ENCODE measurements at regions of chr2 and their contacts with region 1.

Region 1: DNA sequence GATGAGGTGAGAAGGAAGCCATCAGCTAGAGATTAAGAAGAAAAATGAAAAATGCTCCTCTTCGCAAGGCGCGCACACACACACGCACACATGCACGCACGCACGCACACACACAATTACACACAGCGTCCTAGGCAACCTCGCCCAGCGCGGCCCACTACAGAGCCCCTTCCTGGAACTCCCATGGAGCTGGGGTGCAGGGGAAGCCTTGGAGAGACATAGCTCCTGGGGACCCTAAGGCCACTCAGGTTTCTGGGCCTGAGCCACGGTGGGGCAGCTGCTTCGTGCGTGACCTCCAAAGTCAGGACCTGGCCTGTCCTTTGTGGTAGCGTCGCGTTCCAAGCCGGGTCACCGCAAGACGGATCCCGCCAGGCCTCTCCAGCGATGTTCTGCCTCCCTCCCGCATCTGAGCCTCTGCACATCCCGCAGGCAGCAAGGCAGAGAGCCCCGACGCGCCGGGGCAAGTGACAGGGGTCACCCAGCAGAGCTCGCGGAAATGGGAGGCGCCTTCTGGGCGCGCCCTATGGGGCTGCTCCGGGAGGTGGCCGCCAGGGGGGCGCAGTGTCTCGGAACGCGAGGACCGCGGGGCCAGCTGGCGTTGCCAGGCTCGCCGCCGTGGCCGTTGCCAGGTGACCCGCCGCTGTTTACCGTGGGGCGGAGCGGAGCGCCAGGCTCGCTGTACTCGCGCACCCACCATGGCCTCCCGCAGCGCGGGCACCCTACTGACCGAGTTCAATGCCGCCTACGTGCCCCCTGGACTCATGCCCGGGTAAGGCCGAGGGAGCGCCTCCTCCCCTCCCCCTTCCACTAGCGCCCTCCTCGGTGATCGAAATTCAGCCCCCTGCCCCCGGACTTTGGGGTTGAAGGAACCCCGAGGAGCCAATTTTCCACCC is 79.0 kb downstream of the CIB4 start:
- DNase-seq: peak; percentile 64 to 92
- ATAC-seq: peak; percentile 84 to 93
- H3K4me3 ChIP-seq: peak overlapping the region; percentile 50
- H3K27ac ChIP-seq: peak overlapping the region; percentile 51 to 76
- H3K4me1 ChIP-seq: peaks cover 8% of the 10 kb centered on the region; the same call in 1 of the 3 replicates
- CTCF ChIP-seq: peak; percentile 51
- EP300 ChIP-seq: no peak
- POLR2A ChIP-seq: no peak
- RAD21 ChIP-seq: peak; percentile 13 to 49; a peak in 3 of 5 replicates

Region 2: DNA sequence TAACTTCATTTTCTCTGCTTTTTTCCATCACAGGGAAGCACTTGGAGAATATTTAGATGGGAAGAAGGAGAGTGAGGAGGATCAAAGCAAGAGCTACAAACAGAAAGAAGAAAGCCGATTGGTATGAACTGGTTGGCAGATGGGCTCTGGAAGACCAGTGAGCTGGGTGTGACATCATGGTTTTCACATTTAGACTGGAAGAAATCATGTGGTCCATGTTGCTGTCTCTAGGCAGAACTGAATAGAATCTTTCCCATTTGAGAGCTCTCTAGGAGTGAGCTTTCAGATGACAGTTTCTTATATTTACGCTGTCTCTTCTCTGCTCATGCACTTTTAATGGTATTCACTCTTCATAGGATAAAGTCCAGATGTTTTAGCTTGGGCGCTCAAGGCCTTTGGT is 147.9 kb before region 1 on chr2:
- CTCF ChIA-PET with region 1: no interaction called
- POLR2A ChIA-PET with region 1: no interaction called
- DNase-seq: peak in 1 of 2 experiments; percentile 37
- ATAC-seq: peak; percentile 44 to 54; a peak in 3 of 6 replicates
- H3K4me3 ChIP-seq: no peak overlapping the region
- H3K27ac ChIP-seq: no peak overlapping the region
- H3K4me1 ChIP-seq: peaks cover 18% of the 10 kb centered on the region; the same call in 2 of the 3 replicates
- CTCF ChIP-seq: no peak
- EP300 ChIP-seq: no peak
- POLR2A ChIP-seq: no peak
- RAD21 ChIP-seq: no peak

Region 3: GRCh38 chr2:26591619-26592505 is 29.7 kb after region 1 on chr2:
- CTCF ChIA-PET with region 1: interaction called, 11 read pairs
- POLR2A ChIA-PET with region 1: no interaction called
- DNase-seq: no peak
- ATAC-seq: no peak
- H3K4me3 ChIP-seq: no peak overlapping the region
- H3K27ac ChIP-seq: no peak overlapping the region
- H3K4me1 ChIP-seq: 0 out of 3 replicates have a peak, but pooled peaks cover 7% of the 10 kb centered on the region
- CTCF ChIP-seq: no peak
- EP300 ChIP-seq: no peak
- POLR2A ChIP-seq: no peak
- RAD21 ChIP-seq: no peak

Region 4: DNA sequence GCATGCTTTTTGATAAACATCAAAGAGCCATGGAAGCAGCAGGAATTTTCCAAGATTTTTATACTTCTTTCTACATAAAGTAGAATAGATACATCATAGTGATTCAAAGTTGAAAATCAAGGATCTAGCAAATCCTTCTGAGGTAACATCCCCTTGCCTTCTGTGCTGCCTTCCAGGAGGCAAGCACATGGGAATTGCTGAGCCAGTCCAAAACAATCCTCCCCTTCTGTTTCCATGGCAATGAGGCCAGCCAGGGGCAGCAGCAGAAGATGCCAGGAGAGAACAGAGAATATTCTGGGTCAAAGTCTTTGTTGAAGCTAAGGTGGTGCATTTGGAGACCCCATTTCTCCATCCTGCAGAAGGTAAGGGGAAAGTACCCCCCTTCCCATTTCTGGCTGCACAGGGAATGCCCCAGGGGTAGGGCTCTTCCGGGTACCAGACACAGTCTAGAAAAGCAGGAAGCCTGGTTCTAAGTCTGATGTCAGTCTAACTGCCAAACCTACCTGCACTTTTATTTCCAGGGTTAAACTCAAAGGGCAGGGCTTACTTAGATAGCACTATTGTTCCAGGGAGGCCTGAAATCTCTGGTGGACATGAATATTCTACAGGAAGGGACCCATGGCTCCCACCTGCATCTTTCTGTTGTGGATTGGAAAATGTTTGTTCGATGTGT is 245.8 kb after region 1 on chr2:
- CTCF ChIA-PET with region 1: no interaction called
- POLR2A ChIA-PET with region 1: no interaction called
- DNase-seq: no peak
- ATAC-seq: peak; percentile 40 to 49; a peak in 3 of 6 replicates
- H3K4me3 ChIP-seq: no peak overlapping the region
- H3K27ac ChIP-seq: no peak overlapping the region
- H3K4me1 ChIP-seq: no peaks in the 10 kb centered on the region
- CTCF ChIP-seq: no peak
- EP300 ChIP-seq: no peak
- POLR2A ChIP-seq: no peak
- RAD21 ChIP-seq: no peak

Measured in A549 (cell line).